Mammary epithelial cell (primary cell): ENCODE measurements at regions of chr17 and their contacts with region 1.

Region 1: DNA sequence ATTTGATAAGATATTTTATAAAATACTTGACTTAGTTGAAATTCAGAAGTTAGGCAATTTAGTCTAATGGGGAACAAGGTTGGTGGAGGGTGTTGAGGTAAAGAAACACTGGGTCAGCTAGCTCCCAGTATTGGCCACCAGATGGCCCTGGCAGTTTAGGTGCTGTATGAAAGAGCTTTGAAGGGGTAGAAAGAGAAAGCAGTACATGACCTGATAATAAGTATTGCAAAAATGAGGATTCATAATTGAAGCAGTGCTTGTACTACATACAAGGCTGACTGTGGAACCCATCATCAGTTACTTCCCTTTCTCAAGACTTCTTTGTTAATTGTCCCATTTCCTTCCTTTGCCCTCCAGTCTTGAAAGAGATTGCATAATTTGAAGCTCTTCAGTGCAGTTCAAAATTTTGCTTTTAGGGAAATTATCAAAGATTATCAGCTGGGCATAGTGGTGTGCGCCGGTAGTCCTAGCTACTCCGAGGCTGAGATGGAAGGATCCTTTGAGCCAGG is 29.4 kb downstream of the TANC2 start:
- DNase-seq: peak; percentile 43
- H3K4me3 ChIP-seq: no peak overlapping the region
- H3K27ac ChIP-seq: no peak overlapping the region
- H3K4me1 ChIP-seq: peaks cover 15% of the 10 kb centered on the region
- H3K27me3 ChIP-seq: no peaks in the 10 kb centered on the region
- CTCF ChIP-seq: peak; percentile 53 to 72

Region 2: GRCh38 chr17:63189082-63189481 is 193.7 kb after region 1 on chr17:
- CTCF ChIA-PET with region 1: no interaction called
- dilution Hi-C with region 1: no loop called
- in situ Hi-C with region 1: no loop called
- intact Hi-C with region 1: no loop called
- DNase-seq: peak; percentile 58
- H3K4me3 ChIP-seq: no peak overlapping the region
- H3K27ac ChIP-seq: peak overlapping the region; percentile 7
- H3K4me1 ChIP-seq: peaks cover 7% of the 10 kb centered on the region
- H3K27me3 ChIP-seq: no peaks in the 10 kb centered on the region
- CTCF ChIP-seq: no peak

Region 3: GRCh38 chr17:63406689-63407330 is 411.4 kb after region 1 on chr17:
- CTCF ChIA-PET with region 1: interaction called, 11 read pairs
- dilution Hi-C with region 1: no loop called
- in situ Hi-C with region 1: no loop called
- intact Hi-C with region 1: loop called (anchors 1 kb)
- DNase-seq: peak; percentile 77
- H3K4me3 ChIP-seq: no peak overlapping the region
- H3K27ac ChIP-seq: peak overlapping the region; percentile 55
- H3K4me1 ChIP-seq: peaks cover 7% of the 10 kb centered on the region
- H3K27me3 ChIP-seq: no peaks in the 10 kb centered on the region
- CTCF ChIP-seq: peak; percentile 80 to 86